Adrenal gland (tissue), 19 donors: ENCODE measurements at regions of chr12 and their contacts with region 1.

Region 1: DNA sequence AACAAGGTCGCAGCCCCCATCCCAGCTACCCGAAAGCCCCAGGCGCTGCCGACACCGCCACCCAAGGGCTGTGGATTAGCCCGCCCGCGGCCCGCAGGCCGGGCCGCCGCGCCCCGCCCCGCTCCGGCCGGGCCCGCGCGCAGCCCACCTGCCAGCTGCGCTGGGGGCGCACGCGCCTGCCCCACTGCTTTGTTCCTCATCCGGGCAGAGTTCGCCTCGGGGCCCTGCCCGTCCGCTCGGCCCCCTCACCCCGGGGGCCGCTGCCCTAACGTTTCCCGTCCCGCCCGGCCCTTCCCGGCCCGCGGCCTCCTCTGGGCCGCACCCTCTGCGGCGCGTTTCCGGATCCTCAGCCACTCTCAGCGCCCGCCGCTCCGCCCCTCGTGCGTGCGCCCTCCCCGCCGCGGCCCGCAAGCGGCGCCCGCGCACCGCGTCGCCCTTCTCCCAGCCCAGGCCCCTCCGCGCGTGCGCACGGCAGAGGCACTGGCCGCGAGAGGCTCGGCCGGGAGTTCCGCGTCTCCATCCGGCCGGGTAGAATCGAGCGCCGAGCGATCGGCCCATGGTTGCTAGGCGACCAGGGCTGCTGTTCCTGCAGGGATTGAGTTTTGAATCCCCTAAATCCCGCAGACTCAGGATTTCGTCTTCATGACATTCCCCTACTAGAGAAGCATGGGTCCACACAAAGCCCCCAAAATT is at the start of gene PRDM4:
- DNase-seq: peak; percentile 93 to 97 (median 95)
- H3K4me3 ChIP-seq: peak within 1 kb of the TSS; percentile 63 to 93 (median 78)
- H3K27ac ChIP-seq: peak within 1 kb of the TSS in 4 of 5 donors; percentile 46 to 93 (median 76)
- H3K4me1 ChIP-seq: peaks cover 19 to 33% of the 10 kb centered on the region in 2 donors
- H3K27me3 ChIP-seq: no peaks in the 10 kb centered on the region
- CTCF ChIP-seq: peak in 2 of 6 experiments; percentile 19 to 51
- POLR2A ChIP-seq: peak; percentile 92
- total RNA-seq, gene PRDM4: 16.0 to 31.5 (median 22.3) TPM

Region 2: GRCh38 chr12:107685360-107686248 is 75.4 kb before region 1 on chr12 and contains the start of gene PWP1:
- intact Hi-C with region 1: loop called (anchors 5 to 10 kb)
- DNase-seq: peak; percentile 93 to 98 (median 95)
- H3K4me3 ChIP-seq: peak within 1 kb of the TSS; percentile 24 to 98 (median 74)
- H3K27ac ChIP-seq: peak within 1 kb of the TSS in 4 of 5 donors; percentile 46 to 79 (median 69)
- H3K4me1 ChIP-seq: peaks cover 10 to 21% of the 10 kb centered on the region in 2 donors
- H3K27me3 ChIP-seq: no peaks in the 10 kb centered on the region
- CTCF ChIP-seq: no peak
- POLR2A ChIP-seq: peak; percentile 50 to 83
- total RNA-seq, gene PWP1: 21.3 to 87.6 (median 27.4) TPM